ENCODE measurements at regions of chr17 and their contacts with region 1.

Region 1: DNA sequence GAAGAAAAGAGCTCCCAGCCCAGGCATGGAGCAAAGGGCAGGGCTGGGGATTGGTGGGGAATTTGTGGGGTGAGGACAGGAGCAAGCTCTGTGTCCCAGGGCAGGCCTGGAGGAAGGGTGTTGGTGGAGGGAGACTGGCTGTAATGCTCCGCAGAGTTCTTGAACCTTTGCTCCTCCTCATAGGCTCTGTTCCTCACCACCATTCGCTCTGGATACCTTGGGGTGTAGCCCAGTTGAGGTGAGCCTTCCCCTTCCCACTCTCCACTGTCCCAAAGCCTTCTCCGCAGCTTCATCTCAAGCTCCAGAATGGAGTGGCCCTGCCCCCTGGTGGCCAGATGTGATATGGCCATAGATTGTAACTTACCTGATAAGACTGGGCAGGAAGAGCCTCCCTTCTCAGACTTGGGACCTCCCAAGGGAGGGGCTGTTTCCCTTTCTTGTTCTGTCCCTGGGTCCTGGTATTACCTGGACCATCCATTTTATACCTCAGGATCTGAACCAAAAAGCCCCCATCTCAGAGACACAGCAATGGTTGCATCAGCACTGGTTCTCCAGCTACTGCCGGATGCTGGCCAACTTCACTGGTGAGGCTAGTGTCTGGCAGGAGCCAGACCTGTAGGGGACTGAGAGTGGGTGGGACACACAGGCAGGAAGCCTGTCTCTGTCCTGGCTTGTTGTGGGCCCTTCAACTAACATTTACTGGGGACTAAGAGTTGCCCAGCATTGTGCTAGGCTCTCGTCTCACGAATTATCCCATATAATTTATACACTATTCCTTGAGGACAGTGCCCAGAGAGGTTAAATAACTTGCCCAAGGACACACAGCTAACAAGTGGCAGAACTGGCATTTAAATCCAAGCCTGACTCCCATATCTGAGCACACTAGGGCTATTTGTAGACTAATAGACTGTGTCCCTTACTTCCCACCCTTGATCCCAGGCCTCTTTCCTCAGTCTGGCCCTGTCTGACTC is 19.1 kb upstream of the STAC2 start:
- DNase-seq: peak; percentile 92
- H3K4me3 ChIP-seq: no peak overlapping the region
- H3K27ac ChIP-seq: no peak overlapping the region
- H3K4me1 ChIP-seq: no peaks in the 10 kb centered on the region
- H3K27me3 ChIP-seq: no peaks in the 10 kb centered on the region
- CTCF ChIP-seq: peak; percentile 83

Region 2: GRCh38 chr17:39209317-39210092 is 35.4 kb before region 1 on chr17:
- intact Hi-C with region 1: loop called (anchors 5 kb)
- DNase-seq: peak; percentile 57
- H3K4me3 ChIP-seq: peak overlapping the region; percentile 34
- H3K27ac ChIP-seq: no peak overlapping the region
- H3K4me1 ChIP-seq: peaks cover 15% of the 10 kb centered on the region
- H3K27me3 ChIP-seq: no peaks in the 10 kb centered on the region
- CTCF ChIP-seq: no peak